Heart right ventricle (tissue), 16 donors: ENCODE measurements at regions of chr19 and their contacts with region 1.

Region 1: GRCh38 chr19:10332955-10333757 is at the start of gene RAVER1:
- DNase-seq: peak; percentile 98
- ATAC-seq: peak; percentile 90 to 97 (median 94)
- H3K4me3 ChIP-seq: peak within 1 kb of the TSS; percentile 60 to 94 (median 76)
- H3K27ac ChIP-seq: peak within 1 kb of the TSS; percentile 78 to 96 (median 91)
- H3K4me1 ChIP-seq: peaks cover 4 to 42% (median 31%) of the 10 kb centered on the region in 9 donors
- H3K27me3 ChIP-seq: no peaks in the 10 kb centered on the region
- CTCF ChIP-seq: peak in 1 of 9 donors; percentile 10
- total RNA-seq, gene RAVER1: 10.0 to 16.9 (median 12.4) TPM

Region 2: GRCh38 chr19:10230861-10231611 is 102.1 kb before region 1 on chr19 and contains the start of gene S1PR2:
- intact Hi-C with region 1: no loop called
- DNase-seq: peak; percentile 86 to 87
- ATAC-seq: peak; percentile 59 to 84 (median 72)
- H3K4me3 ChIP-seq: peak within 1 kb of the TSS; percentile 70 to 99 (median 94)
- H3K27ac ChIP-seq: peak within 1 kb of the TSS; percentile 81 to 99 (median 94)
- H3K4me1 ChIP-seq: peaks cover 8 to 65% (median 54%) of the 10 kb centered on the region in 9 donors
- H3K27me3 ChIP-seq: peaks cover 0 to 7% (median 0%) of the 10 kb centered on the region in 7 donors
- CTCF ChIP-seq: peak in 1 of 9 donors; percentile 18
- total RNA-seq, gene S1PR2: 1.8 to 12.2 (median 3.3) TPM

Region 3: DNA sequence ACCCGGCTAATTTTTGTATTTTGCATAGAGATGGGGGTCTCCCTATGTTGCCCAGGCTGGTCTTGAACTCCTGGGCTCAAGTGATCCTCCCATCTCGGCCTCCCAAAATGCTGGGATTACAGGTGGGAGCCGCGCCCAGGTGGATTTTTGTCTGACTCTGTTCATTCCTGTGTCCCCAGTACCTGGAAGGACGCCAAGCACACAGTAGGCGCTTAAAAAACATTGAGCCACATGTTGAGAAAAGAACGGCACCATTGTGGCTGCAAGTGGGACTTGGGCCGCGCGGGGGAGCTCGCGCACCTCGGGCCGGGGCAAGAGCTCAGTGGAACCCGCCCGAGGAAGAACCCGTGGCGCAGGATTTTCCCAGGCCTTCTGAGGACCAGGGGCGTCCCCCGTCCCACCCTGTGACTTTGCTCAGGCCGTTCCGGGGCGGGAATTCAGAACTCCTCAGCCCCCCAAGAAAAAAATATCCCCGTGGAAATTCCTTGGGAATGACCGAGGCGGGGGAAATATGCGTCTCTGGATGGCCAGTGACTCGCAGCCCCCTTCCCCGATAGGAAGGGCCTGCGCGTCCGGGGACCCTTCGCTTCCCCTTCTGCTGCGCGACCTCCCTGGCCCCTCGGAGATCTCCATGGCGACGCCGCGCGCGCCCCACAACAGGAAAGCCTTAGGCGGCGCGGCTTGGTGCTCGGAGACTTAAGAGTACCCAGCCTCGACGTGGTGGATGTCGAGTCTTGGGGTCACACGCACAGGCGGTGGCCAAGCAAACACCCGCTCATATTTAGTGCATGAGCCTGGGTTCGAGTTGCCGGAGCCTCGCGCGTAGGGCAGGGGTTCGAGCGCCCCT is 63.6 kb before region 1 on chr19:
- intact Hi-C with region 1: loop called in 6 of 10 experiments (anchors 5 to 10 kb)
- DNase-seq: peak; percentile 89 to 91
- ATAC-seq: peak; percentile 74 to 91 (median 88)
- H3K4me3 ChIP-seq: peak overlapping the region; percentile 12 to 78 (median 58)
- H3K27ac ChIP-seq: peak overlapping the region; percentile 87 to 99 (median 91)
- H3K4me1 ChIP-seq: peaks cover 7 to 70% (median 46%) of the 10 kb centered on the region in 9 donors
- H3K27me3 ChIP-seq: peaks cover 0 to 19% (median 3%) of the 10 kb centered on the region in 7 donors
- CTCF ChIP-seq: peak; percentile 94 to 99 (median 97)

Region 4: DNA sequence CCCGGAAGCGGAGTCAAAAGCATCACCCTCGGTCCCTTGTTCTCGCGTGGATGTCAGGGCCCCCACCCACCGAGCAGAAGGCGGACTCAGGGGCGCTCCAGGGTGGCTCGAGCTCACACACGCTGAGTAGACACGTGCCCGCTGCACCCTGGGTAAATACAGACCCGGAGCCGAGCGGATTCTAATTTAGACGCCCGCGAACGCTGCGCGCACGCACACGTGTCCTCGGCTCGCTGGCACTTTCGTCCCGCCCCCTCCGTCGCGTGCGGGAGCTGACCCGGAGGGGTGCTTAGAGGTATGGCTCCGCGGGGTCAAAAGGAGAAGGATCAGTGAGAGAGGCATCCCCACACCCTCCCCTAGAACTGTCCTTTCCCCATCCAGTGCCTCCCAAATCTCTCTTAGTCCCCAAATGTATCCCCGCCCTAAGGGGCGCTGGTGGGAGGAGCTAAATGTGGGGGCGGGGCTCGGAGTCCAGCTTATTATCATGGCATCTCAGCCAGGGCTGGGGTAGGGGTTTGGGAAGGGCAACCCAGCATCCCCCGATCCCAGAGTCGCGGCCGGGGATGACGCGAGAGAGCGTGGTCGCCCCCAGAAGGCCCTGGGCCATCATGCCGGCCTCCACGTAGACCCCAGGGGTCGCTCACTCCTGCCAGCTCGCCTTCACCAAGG is 43.9 kb before region 1 on chr19:
- intact Hi-C with region 1: loop called in 2 of 10 experiments (anchors 5 kb)
- DNase-seq: no peak
- ATAC-seq: no peak
- H3K4me3 ChIP-seq: peak overlapping the region in 9 of 10 donors; percentile 25 to 56 (median 41)
- H3K27ac ChIP-seq: no peak overlapping the region
- H3K4me1 ChIP-seq: peaks cover 23 to 93% (median 77%) of the 10 kb centered on the region in 9 donors
- H3K27me3 ChIP-seq: peaks cover 25 to 75% (median 72%) of the 10 kb centered on the region in 7 donors
- CTCF ChIP-seq: no peak

Region 5: DNA sequence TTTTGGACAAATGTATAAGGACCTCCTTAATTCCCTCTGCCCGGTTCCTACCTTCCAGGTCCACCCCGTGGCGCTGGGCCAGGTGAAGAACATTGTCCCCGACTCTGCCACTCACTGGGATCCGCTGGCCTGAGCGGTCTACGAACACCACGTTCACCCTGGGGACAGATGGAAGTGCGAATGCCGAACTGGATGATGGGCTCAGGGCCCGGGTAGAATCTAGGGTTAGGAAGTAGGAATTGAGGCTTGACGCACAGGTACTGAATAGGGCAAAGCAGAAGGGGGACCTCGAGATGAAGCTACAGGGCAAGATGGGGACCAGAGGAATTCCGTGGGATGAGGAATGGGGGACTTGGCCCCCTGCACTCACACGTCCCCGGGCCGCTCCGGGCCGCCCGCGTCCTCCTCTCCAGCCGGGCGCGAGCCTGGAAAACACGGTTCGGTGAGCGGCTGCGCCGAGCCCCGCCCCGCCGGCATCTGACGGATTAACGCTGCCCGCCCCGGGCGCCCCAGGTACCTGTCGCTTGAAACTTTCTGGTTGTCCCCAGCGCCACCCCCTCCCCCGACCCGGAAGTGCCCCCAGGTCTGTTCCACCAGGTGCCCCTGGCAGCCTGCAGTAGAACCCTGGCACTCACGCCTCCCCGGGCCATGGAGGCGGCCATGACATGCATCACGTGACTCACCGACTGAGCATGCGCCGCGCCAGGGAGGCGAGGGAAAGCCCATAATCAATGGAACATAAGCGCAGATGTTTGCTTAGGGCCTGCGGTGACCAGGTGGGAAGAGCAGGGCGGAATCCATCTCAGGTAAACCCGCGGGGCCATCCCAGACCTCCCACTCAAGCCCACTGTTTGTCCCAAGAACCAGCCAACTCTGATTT is 17.6 kb before region 1 on chr19 and contains the start of gene FDX2:
- intact Hi-C with region 1: loop called in 1 of 10 experiments (anchors 1 kb)
- DNase-seq: peak; percentile 88 to 92
- ATAC-seq: peak; percentile 88 to 97 (median 94)
- H3K4me3 ChIP-seq: peak within 1 kb of the TSS; percentile 61 to 98 (median 90)
- H3K27ac ChIP-seq: peak within 1 kb of the TSS in 9 of 10 donors; percentile 30 to 81 (median 66)
- H3K4me1 ChIP-seq: peaks cover 4 to 22% (median 17%) of the 10 kb centered on the region in 9 donors
- H3K27me3 ChIP-seq: no peaks in the 10 kb centered on the region
- CTCF ChIP-seq: no peak
- total RNA-seq, gene FDX2: 11.7 to 21.8 (median 17.1) TPM

Region 6: DNA sequence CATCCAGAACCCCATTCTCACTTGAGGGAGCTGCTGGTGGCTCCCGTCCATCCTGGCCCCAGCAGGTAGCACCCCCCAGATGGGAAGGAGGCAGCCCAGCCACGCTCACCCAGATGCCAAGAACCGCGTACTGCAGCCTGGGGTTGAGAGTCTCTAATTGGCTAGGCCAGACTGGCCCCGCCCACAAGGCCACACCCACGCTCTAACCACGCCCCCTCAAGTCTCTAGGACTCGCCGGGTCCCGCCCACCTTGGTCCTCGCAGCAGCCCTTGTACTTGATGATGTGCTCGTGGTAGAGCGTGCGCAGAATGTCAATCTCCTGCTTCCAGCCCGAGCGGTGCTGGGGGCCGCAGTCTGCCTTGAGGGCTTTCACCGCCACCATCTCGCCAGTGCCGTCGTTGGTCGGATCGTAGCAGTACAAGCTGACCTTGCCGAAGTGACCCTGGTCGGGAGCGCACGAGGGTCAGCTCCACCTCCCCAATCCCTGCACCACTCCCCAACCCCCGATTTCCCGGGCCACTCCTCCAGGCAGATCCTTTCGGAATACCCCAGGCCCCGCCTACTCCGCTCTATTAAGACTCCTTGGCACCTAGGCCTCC is 20.7 kb after region 1 on chr19:
- intact Hi-C with region 1: loop called in 1 of 10 experiments (anchors 2 kb)
- DNase-seq: peak; percentile 85 to 86
- ATAC-seq: peak; percentile 61 to 88 (median 86)
- H3K4me3 ChIP-seq: peak overlapping the region in 9 of 10 donors; percentile 22 to 49 (median 43)
- H3K27ac ChIP-seq: peak overlapping the region in 9 of 10 donors; percentile 68 to 90 (median 83)
- H3K4me1 ChIP-seq: peaks cover 0 to 20% (median 13%) of the 10 kb centered on the region in 9 donors
- H3K27me3 ChIP-seq: no peaks in the 10 kb centered on the region
- CTCF ChIP-seq: no peak

Region 7: DNA sequence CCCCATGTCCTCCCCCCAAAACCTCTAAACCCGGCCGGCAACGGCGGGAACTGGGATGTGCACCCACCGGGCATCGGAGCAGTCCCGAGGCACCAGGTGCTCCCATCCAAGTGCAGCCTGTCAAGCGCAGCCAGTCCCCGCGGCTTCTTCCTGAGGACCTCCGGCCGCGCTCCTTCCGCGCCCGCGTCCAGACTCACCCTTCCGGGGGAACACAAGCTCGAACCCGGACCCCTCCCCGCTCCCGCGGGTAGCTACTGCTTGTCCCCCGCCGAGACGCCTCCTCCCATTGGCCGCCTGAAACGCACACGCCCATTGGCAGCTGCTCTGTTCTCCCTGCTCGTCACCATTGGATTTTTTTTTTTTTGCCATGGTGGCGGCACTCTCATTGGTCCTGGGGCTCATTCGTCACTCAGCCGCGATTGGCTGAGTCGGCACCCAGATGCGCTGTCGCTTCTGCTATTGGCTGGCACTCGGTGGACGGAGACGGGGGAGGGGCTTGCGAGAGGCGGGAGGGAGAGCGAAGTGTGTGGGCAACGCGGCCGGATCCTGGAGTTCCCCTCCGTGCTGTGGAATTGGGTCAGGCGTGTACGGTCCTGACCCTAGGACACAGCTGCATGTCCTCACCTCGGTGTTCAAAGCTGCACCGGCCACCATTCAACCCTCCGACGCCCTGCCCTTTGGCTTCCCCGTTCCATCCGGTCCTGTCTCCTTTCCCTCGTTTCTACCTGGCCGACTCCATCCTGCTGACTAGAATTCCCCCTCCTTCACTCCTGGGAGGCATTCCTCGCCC is 47.4 kb after region 1 on chr19 and contains the start of gene TYK2:
- intact Hi-C with region 1: loop called in 6 of 10 experiments (anchors 1 to 5 kb)
- DNase-seq: peak; percentile 97 to 98
- ATAC-seq: peak; percentile 97 to 99 (median 99)
- H3K4me3 ChIP-seq: peak within 1 kb of the TSS; percentile 67 to 98 (median 84)
- H3K27ac ChIP-seq: peak within 1 kb of the TSS; percentile 63 to 94 (median 83)
- H3K4me1 ChIP-seq: peaks cover 0 to 36% (median 23%) of the 10 kb centered on the region in 9 donors
- H3K27me3 ChIP-seq: no peaks in the 10 kb centered on the region
- CTCF ChIP-seq: no peak
- total RNA-seq, gene TYK2: 37.0 to 80.2 (median 55.8) TPM

Region 8: DNA sequence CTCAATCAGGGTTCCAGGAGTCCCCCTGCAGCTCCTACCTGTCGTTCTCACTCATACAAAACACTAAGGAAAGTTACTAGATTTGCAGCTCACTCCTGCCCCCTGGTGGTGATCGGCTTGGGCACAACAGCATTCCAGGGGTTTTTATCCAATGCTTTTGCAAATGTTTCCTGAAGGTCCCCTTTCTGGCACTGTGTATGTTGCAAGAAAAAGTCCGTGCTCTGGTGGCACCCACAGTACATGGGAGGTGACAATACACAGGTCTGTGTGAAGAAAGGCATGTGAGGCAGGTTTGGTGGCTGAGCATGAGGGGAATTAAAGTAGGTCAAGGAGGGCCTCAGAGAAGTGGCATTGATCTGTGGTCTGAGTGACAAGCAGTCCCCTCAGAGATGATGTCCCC is 55.8 kb after region 1 on chr19:
- intact Hi-C with region 1: loop called in 3 of 10 experiments (anchors 5 kb)
- DNase-seq: peak; percentile 87 to 92
- ATAC-seq: peak; percentile 46 to 76 (median 70)
- H3K4me3 ChIP-seq: no peak overlapping the region
- H3K27ac ChIP-seq: no peak overlapping the region
- H3K4me1 ChIP-seq: peaks cover 0 to 28% (median 5%) of the 10 kb centered on the region in 9 donors
- H3K27me3 ChIP-seq: no peaks in the 10 kb centered on the region
- CTCF ChIP-seq: peak; percentile 90 to 96 (median 94)